ENCODE measurements at regions of chr6 and their contacts with region 1.

Region 1: DNA sequence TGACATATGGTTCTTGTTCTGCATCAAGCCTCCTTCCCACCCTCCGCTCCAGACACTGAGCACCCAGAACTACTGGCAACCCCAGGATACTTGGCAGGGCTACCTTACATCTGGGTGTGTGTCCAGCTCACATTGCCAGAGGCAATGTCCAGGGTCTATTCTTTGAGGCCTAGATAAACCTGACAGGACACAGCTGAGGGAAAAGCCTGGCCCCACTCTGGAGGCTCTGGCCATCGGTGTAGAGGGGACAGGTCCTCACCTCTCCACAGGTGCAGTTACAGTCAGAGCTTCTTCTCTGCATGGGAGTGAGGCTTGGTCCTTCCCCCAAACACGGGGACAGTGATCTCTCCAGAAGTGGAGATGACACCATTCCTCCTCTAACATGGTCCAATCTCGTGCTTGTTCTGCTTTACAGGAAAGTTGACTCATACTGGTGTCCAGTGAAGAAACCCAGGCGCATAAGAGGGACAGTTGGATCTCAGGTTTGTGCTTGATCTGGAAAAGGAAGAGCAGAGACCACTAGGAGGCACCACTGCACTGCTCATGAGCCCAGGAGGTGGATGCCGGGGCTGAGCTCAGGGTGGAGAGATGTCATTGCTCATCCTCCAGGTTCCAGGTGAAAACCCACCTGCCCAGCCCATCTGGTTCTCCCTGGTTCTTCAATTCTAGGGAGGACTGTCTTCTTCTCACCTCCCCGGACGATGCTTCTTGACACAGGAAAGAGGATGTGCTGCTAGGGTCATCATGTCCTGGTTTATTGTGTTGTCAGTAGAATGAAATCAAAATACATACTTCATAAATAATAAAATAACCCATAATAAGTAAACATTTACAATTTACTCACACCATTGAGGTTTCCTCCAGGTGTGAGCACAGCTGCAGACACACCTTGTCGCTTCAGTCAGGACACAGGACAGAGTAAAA is 14.7 kb downstream of the HLA-F start:
- DNase-seq: peak; percentile 81
- H3K4me3 Mint-ChIP-seq: no peak overlapping the region
- H3K27ac Mint-ChIP-seq: no peak overlapping the region
- H3K4me1 Mint-ChIP-seq: peaks cover 10% of the 10 kb centered on the region
- H3K27me3 Mint-ChIP-seq: no peaks in the 10 kb centered on the region

Region 2: GRCh38 chr6:29748391-29749307 is 10.7 kb after region 1 on chr6:
- CTCF ChIA-PET with region 1: interaction called, 18 read pairs
- POLR2A ChIA-PET with region 1: no interaction called
- DNase-seq: peak; percentile 88
- H3K4me3 Mint-ChIP-seq: peak overlapping the region; percentile 99
- H3K27ac Mint-ChIP-seq: peak overlapping the region; percentile 96
- H3K4me1 Mint-ChIP-seq: peaks cover 61% of the 10 kb centered on the region
- H3K27me3 Mint-ChIP-seq: no peaks in the 10 kb centered on the region

Measured in activated CD4-positive, alpha-beta T cell treated with anti-CD3 and anti-CD28 coated beads, Interleukin-2, amount 10 ng/mL, durations not matched to agents 7 days and 5 days (primary cell).